ENCODE measurements at regions of chr1 and their contacts with region 1.

Region 1: DNA sequence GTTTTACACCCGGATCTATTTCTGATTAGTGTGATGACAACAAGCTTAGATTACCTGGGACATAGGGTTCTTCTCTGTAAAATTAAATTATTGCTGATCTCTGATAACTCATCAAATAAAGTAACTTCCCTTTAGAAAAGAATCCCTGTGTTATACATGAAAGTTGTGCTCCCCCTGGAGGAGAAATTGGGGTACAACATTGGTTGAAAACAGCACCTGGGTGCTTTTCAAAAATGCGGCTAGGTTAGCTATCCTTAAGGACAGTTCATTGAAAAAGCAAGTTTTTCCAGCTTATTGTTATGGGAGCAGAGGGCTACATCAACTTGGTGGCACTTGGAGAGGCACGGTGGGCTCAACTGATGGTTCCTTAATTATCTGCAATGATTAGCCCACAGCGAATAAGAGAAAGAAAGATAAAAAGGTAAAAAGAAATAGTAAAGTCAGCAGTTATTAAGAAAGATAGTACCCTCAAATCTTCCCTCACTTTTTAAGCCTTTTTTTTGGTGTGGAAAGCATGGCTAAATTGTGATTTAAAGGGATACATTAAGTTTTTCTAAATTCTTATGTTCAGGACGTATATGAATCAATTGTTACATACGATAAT is 97.8 kb downstream of the FMN2 start:
- DNase-seq: no peak
- ATAC-seq: peak; percentile 66
- H3K4me3 ChIP-seq: no peak overlapping the region
- H3K27ac ChIP-seq: no peak overlapping the region
- H3K4me1 ChIP-seq: no peaks in the 10 kb centered on the region
- H3K27me3 ChIP-seq: no peaks in the 10 kb centered on the region
- CTCF ChIP-seq: peak; percentile 53 to 70 (median 69)
- EP300 ChIP-seq: no peak
- POLR2A ChIP-seq: no peak
- RAD21 ChIP-seq: peak; percentile 43

Region 2: GRCh38 chr1:240027059-240027462 is 162.4 kb before region 1 on chr1:
- CTCF ChIA-PET with region 1: interaction called, 9 read pairs
- POLR2A ChIA-PET with region 1: no interaction called
- RAD21 ChIA-PET with region 1: no interaction called
- SMC1A ChIA-PET with region 1: interaction called, 4 read pairs
- in situ Hi-C with region 1: no loop called
- intact Hi-C with region 1: loop called (anchors 1 kb)
- DNase-seq: no peak
- ATAC-seq: peak; percentile 88
- H3K4me3 ChIP-seq: no peak overlapping the region
- H3K27ac ChIP-seq: no peak overlapping the region
- H3K4me1 ChIP-seq: no peaks in the 10 kb centered on the region
- H3K27me3 ChIP-seq: no peaks in the 10 kb centered on the region
- CTCF ChIP-seq: peak; percentile 66 to 69 (median 67)
- EP300 ChIP-seq: no peak
- POLR2A ChIP-seq: no peak
- RAD21 ChIP-seq: peak; percentile 70

Region 3: GRCh38 chr1:240207073-240207709 is 17.7 kb after region 1 on chr1:
- CTCF ChIA-PET with region 1: no interaction called
- POLR2A ChIA-PET with region 1: no interaction called
- RAD21 ChIA-PET with region 1: no interaction called
- SMC1A ChIA-PET with region 1: no interaction called
- in situ Hi-C with region 1: no loop called
- intact Hi-C with region 1: no loop called
- DNase-seq: no peak
- ATAC-seq: no peak
- H3K4me3 ChIP-seq: no peak overlapping the region
- H3K27ac ChIP-seq: no peak overlapping the region
- H3K4me1 ChIP-seq: no peaks in the 10 kb centered on the region
- H3K27me3 ChIP-seq: no peaks in the 10 kb centered on the region
- CTCF ChIP-seq: no peak
- EP300 ChIP-seq: no peak
- POLR2A ChIP-seq: no peak
- RAD21 ChIP-seq: no peak

Region 4: GRCh38 chr1:240608707-240609106 is 419.2 kb after region 1 on chr1:
- CTCF ChIA-PET with region 1: no interaction called
- POLR2A ChIA-PET with region 1: no interaction called
- RAD21 ChIA-PET with region 1: no interaction called
- SMC1A ChIA-PET with region 1: no interaction called
- in situ Hi-C with region 1: no loop called
- intact Hi-C with region 1: loop called (anchors 5 kb)
- DNase-seq: no peak
- ATAC-seq: peak; percentile 59; the same call in 2 of the 3 replicates
- H3K4me3 ChIP-seq: no peak overlapping the region
- H3K27ac ChIP-seq: no peak overlapping the region
- H3K4me1 ChIP-seq: no peaks in the 10 kb centered on the region
- H3K27me3 ChIP-seq: peaks cover 0 to 2% of the 10 kb centered on the region in 2 experiments; a peak in 1 of 4 replicates
- CTCF ChIP-seq: peak in 2 of 3 experiments; percentile 28 to 39; a peak in 2 of 6 replicates
- EP300 ChIP-seq: no peak
- POLR2A ChIP-seq: no peak
- RAD21 ChIP-seq: no peak

Measured in GM12878 (cell line).